Endothelial cell of umbilical vein (primary cell): ENCODE measurements at regions of chr17 and their contacts with region 1.

Region 1: DNA sequence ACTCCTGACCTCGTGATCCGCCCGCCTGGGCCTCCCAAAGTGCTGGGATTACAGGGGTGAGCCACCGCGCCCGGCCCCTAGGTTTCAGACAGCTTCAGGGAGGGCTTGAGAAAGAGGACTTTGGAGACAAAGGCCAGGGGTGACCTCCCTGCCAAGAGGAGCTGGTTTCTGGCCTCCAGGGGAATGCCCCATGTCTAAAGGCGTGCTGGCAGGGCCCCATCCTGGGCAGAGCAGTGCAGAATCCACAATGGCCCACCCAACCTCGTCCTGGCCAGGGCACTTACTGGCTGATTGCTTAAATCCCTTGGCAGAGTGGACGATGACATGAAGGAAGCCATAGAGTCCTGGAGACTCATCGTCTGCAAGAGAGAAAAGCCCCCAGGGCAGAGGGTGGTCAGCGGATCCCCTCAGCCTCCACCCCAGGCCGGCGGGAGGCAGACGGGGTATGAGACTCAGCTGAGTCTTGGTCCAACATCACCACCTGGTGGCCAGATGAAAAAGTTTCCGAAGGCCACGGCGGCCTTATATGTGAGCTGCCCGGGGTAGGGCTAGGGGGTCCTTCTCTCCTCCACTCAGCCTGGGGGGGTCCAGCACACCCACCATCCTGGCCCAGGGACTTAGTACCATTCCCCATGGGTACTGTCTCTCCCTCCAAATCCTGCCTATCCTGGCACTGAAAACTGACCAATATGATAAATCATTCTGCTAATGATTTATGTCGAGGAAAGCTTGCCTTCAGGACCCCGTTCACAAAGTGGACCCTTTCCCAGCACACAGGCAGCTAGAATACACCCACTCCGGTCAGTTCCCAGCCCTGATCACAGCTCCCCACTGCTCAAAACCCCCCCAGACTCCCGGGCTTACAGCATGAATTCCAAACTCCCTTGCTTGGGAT is 59.1 kb downstream of the TIMM22 start:
- DNase-seq: peak; percentile 66
- H3K4me3 ChIP-seq: no peak overlapping the region
- H3K27ac ChIP-seq: no peak overlapping the region
- H3K4me1 ChIP-seq: no peaks in the 10 kb centered on the region
- H3K27me3 ChIP-seq: no peaks in the 10 kb centered on the region
- CTCF ChIP-seq: peak; percentile 58 to 81
- POLR2A ChIP-seq: no peak

Region 2: DNA sequence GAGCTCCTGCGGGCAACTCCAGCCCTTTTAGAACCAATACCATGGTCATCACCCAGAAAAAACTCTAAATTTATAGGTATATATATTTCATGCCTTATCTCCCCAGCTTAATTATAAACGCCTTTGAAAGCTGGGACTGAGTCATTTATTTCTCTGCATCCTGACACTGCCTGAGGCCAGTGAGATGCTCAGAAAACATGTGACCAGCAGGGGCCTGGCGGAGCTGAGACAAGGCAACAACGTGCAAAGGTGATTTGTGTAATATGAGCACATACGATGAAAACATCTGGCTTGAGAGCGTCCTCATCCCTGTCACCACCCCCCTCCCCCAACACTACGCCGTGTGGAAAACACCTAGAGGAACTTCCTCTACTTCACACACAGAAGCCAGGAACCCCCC is 99.1 kb before region 1 on chr17:
- CTCF ChIA-PET with region 1: no interaction called
- POLR2A ChIA-PET with region 1: no interaction called
- dilution Hi-C with region 1: no loop called
- intact Hi-C with region 1: no loop called
- DNase-seq: peak; percentile 24
- H3K4me3 ChIP-seq: no peak overlapping the region
- H3K27ac ChIP-seq: no peak overlapping the region
- H3K4me1 ChIP-seq: peaks cover 5% of the 10 kb centered on the region
- H3K27me3 ChIP-seq: no peaks in the 10 kb centered on the region
- CTCF ChIP-seq: no peak
- POLR2A ChIP-seq: no peak

Region 3: DNA sequence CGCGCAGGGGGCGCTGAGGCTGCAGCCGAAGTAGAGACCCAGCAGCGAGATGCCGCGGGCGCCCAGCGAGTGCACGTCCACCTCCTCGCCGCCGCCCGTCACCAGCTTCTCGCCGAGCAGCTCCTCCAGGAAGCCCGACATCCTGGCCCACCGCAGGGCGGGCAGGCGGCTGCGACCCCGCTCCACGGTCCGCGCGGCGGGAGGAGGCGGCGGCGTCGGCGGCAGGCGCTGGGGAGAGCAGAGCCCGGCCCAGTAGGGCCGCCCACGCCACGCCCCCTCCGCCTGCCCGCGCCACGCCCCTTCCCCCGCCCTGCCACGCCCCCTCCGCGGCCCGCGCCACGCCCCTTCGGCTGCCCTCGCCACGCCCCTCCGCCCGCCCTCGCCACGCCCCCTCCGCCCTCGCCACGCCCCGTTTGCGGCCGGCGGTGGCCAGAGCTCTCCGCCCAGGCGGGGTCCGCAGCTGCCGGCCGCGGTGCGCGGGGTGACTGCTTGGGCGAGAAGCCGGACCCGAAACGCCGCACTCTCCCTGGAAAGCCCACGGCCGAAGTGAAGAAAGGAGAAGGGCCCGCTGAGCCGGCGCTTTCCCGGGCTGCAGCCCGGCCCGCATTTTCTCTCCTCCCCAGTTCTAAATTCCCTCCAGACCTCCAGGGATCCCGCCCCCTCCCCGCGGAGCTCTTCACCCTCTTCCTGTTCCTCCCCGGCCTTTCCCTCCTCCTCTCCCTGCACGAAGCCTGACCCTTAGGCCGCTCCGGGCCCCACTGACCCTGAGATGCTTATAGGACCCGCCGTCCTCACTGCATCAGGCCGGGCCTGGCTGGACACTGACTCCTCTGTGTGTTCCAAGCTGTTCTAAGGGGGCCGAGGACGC is 76.2 kb before region 1 on chr17 and contains the start of gene NXN:
- CTCF ChIA-PET with region 1: interaction called, 81 read pairs
- POLR2A ChIA-PET with region 1: no interaction called
- dilution Hi-C with region 1: no loop called
- intact Hi-C with region 1: loop called (anchors 1 kb)
- DNase-seq: peak; percentile 80
- H3K4me3 ChIP-seq: peak within 1 kb of the TSS; percentile 84 to 93 (median 91)
- H3K27ac ChIP-seq: no peak within 1 kb of the TSS
- H3K4me1 ChIP-seq: peaks cover 21% of the 10 kb centered on the region
- H3K27me3 ChIP-seq: no peaks in the 10 kb centered on the region
- CTCF ChIP-seq: peak in 1 of 2 donors; percentile 45
- POLR2A ChIP-seq: peak; percentile 82
- total RNA-seq, gene NXN: 58.9 and 77.3 TPM in 2 replicates

Region 4: DNA sequence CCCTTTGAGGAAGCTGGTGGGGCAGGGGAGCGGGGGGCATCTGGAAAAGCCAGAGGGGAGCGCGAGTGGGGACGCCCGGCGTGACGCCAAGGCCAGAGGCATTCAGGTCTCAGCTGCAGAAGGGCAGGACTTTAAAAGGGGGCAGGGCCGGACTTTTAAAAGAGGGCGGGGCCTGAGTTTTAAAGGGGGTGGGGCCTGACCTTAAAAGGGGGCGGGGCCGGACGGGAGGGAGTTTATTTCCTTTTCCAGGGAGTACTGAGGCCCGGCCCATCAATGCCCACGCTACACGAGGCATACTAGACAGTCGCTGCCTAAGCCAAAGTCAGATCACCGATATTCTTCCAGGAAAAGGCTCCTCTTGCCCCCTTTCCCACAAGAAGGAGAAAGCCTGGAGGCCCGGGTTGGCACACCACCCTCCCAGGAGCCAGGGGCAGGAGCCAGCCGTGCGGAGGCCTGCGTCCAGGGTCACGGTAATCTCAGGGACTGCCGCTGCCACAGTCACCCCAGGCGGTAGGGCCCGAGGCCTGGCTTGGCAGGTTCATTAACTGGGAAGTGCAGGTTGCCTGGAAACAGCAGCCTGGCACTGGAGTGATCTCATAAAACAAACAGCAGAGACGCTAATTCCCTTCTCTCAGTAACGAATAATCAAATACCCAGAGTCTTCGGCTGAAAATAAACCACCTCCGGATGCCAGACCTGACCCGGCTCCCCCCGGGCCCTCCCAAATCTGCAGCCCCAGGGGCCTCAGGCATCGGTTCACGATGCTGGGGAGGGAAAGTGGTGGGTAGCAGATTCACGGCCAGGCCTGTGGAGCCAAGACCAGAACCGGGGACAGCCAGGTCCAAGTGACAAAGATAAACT is 31.6 kb after region 1 on chr17:
- CTCF ChIA-PET with region 1: interaction called, 38 read pairs
- POLR2A ChIA-PET with region 1: no interaction called
- dilution Hi-C with region 1: no loop called
- intact Hi-C with region 1: loop called (anchors 2 kb)
- DNase-seq: peak; percentile 84
- H3K4me3 ChIP-seq: peak overlapping the region in 1 of 3 experiments; percentile 9
- H3K27ac ChIP-seq: peak overlapping the region; percentile 95
- H3K4me1 ChIP-seq: peaks cover 25% of the 10 kb centered on the region
- H3K27me3 ChIP-seq: no peaks in the 10 kb centered on the region
- CTCF ChIP-seq: no peak
- POLR2A ChIP-seq: no peak

Region 5: DNA sequence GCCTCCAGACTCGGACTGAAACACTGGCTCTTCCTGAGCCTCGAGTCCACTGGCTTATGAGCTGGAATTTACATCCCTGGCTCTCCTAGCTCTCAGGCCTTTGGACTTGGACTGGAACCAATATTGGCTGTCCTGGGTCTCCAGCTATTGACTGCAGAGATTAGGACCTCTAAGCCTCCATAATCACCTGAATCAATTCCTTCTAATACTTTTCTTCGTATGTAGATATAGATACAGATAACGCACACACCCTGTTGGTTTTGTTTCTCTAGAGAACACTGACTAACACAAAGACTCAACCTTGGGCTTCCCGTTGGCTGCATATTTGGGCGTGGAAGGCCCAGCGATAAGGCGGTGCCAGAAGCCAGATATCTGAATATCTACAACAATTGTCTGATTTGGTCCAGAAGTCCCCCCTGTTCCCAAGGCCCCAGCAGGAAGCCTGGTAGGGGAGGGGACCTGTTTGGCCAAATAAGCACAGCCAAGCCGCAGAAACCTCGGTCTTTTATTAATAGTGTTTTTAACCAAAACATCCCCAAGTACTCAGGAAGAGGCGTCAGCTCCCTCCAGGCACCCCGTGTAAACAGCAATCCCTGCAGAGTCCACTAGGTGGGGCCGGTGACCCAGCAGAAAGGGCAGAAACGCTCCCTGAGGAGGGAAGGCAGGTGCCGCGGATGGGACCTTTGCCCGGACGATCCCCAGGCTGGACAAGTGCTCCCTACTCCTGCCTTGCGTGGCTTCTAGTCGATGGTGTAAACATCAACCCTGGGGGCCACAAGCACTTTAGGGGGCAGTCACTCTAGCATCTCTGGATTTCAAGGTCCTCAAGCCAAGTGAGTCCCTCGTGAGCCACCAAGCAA is 66.8 kb after region 1 on chr17:
- CTCF ChIA-PET with region 1: interaction called, 106 read pairs
- POLR2A ChIA-PET with region 1: interaction called, 3 read pairs
- dilution Hi-C with region 1: no loop called
- intact Hi-C with region 1: loop called (anchors 1 kb)
- DNase-seq: peak; percentile 89
- H3K4me3 ChIP-seq: no peak overlapping the region
- H3K27ac ChIP-seq: peak overlapping the region; percentile 68
- H3K4me1 ChIP-seq: peaks cover 13% of the 10 kb centered on the region
- H3K27me3 ChIP-seq: no peaks in the 10 kb centered on the region
- CTCF ChIP-seq: peak; percentile 89
- POLR2A ChIP-seq: no peak

Region 6: DNA sequence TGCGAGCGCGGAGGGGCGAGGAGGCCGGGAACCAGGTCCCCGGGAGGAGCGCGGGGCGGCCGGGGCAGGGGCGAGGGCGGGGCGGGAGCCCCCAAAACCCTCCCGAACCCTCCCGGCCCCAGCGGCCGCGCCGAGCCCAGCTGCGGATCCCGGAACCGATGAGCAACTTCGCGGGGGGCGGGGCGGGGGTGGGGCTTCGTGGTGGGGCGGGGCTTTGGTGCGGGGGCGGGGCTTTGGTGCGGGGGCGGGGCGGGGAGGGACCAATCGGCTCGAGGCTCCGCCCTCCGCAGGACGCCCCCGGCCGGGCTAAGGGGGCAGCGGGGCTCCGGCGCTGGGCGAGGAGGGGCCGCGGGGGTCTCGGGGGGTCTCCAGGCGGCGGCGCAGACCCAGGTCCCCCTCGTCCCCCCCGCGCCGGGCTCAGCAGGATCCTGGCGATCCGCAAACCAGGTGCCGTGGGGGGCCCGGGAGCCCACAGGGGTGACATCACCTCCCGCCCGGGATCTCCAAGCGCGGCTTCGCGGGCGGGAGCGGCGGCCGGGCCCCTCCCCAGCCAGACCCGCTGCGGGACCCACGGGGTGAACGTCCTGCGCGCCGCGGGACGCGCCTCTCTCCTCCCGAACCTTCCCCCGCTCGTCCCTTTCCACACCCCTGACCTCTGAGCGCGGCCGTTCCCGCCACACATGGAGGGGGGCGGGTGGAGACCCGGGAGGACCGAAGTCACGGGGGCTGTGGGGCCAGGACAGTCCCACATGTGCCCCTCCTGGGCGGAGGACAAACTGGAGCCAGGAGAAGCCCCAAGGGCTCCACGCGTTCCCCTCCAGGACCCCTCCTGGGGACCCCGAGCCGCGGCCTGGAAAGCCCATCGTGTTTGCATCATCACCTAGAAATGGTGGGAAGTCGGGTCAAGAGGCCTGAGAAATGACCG is 124.1 kb after region 1 on chr17 and contains the start of gene ABR:
- CTCF ChIA-PET with region 1: interaction called, 260 read pairs
- POLR2A ChIA-PET with region 1: no interaction called
- dilution Hi-C with region 1: no loop called
- intact Hi-C with region 1: no loop called
- DNase-seq: peak; percentile 33
- H3K4me3 ChIP-seq: peak within 1 kb of the TSS; percentile 53 to 82 (median 77)
- H3K27ac ChIP-seq: no peak within 1 kb of the TSS
- H3K4me1 ChIP-seq: peaks cover 7% of the 10 kb centered on the region
- H3K27me3 ChIP-seq: no peaks in the 10 kb centered on the region
- CTCF ChIP-seq: no peak
- POLR2A ChIP-seq: no peak
- total RNA-seq, gene ABR: 78.9 and 96.8 TPM in 2 replicates

Region 7: DNA sequence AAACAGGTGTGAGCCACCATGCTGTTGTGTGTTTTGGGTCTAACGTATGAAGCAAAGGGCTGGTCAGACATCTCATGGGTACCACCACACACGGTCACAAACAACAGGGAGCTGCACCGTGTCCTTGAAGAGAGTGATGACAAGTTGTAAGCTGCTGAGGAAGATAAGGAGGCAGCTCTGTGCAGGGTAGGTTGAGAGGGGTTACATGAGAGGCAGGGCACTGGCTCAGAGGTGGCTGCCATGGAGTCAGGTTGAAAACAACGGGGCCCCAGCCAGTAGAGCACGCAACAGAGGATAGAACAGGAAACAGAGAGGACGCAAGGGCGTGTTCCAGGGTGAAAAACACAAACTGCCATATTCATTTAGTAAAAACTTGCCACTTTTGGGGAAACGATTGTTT is 275.7 kb after region 1 on chr17:
- CTCF ChIA-PET with region 1: interaction called, 26 read pairs
- POLR2A ChIA-PET with region 1: no interaction called
- dilution Hi-C with region 1: no loop called
- intact Hi-C with region 1: loop called (anchors 2 kb)
- DNase-seq: no peak
- H3K4me3 ChIP-seq: no peak overlapping the region
- H3K27ac ChIP-seq: no peak overlapping the region
- H3K4me1 ChIP-seq: no peaks in the 10 kb centered on the region
- H3K27me3 ChIP-seq: no peaks in the 10 kb centered on the region
- CTCF ChIP-seq: no peak
- POLR2A ChIP-seq: no peak